Mammary epithelial cell (primary cell): ENCODE measurements at regions of chr6 and their contacts with region 1.

Region 1: GRCh38 chr6:90098001-90098531 is 198.6 kb downstream of the BACH2 start:
- DNase-seq: peak; percentile 98
- H3K4me3 ChIP-seq: no peak overlapping the region
- H3K27ac ChIP-seq: peak overlapping the region; percentile 94
- H3K4me1 ChIP-seq: peaks cover 26% of the 10 kb centered on the region
- H3K27me3 ChIP-seq: no peaks in the 10 kb centered on the region
- CTCF ChIP-seq: peak; percentile 53 to 68

Region 2: GRCh38 chr6:89745716-89746115 is 352.4 kb before region 1 on chr6:
- CTCF ChIA-PET with region 1: no interaction called
- dilution Hi-C with region 1: no loop called
- in situ Hi-C with region 1: no loop called
- intact Hi-C with region 1: no loop called
- DNase-seq: no peak
- H3K4me3 ChIP-seq: no peak overlapping the region
- H3K27ac ChIP-seq: peak overlapping the region; percentile 43
- H3K4me1 ChIP-seq: peaks cover 8% of the 10 kb centered on the region
- H3K27me3 ChIP-seq: no peaks in the 10 kb centered on the region
- CTCF ChIP-seq: no peak

Region 3: GRCh38 chr6:89999154-89999553 is 98.9 kb before region 1 on chr6:
- CTCF ChIA-PET with region 1: interaction called, 3 read pairs
- dilution Hi-C with region 1: no loop called
- in situ Hi-C with region 1: no loop called
- intact Hi-C with region 1: loop called (anchors 5 kb)
- DNase-seq: peak; percentile 77
- H3K4me3 ChIP-seq: no peak overlapping the region
- H3K27ac ChIP-seq: no peak overlapping the region
- H3K4me1 ChIP-seq: peaks cover 44% of the 10 kb centered on the region
- H3K27me3 ChIP-seq: no peaks in the 10 kb centered on the region
- CTCF ChIP-seq: no peak

Region 4: DNA sequence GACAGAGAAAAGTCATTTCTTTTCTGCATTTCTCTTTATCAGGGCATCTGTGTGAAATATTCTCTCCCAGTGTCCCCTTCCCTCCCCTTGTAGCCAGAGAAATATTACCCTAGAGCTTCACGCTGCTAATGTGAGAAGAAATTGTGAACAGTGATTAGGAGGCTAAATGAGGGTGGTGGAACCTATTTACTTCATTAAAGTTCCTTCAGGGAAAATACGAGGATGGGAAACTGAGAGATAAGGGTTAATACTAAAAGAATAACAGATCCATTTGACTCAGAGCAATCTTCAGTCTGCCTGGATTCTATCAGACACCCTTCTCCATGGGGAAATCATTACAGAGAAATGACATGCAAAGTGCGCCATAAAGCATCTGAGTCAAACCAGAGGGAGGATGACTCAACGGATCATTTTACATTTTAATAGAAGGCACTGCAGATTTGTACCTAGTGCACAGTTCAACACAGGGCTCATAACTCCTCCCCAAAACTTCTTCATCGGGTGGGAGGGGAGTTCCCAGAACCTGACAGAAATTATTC is 72.5 kb before region 1 on chr6:
- CTCF ChIA-PET with region 1: no interaction called
- dilution Hi-C with region 1: no loop called
- in situ Hi-C with region 1: no loop called
- intact Hi-C with region 1: no loop called
- DNase-seq: peak; percentile 86
- H3K4me3 ChIP-seq: no peak overlapping the region
- H3K27ac ChIP-seq: no peak overlapping the region
- H3K4me1 ChIP-seq: peaks cover 9% of the 10 kb centered on the region
- H3K27me3 ChIP-seq: no peaks in the 10 kb centered on the region
- CTCF ChIP-seq: no peak

Region 5: GRCh38 chr6:90144396-90144795 is 46.3 kb after region 1 on chr6:
- CTCF ChIA-PET with region 1: no interaction called
- dilution Hi-C with region 1: no loop called
- in situ Hi-C with region 1: no loop called
- intact Hi-C with region 1: no loop called
- DNase-seq: peak; percentile 42
- H3K4me3 ChIP-seq: no peak overlapping the region
- H3K27ac ChIP-seq: no peak overlapping the region
- H3K4me1 ChIP-seq: no peaks in the 10 kb centered on the region
- H3K27me3 ChIP-seq: no peaks in the 10 kb centered on the region
- CTCF ChIP-seq: no peak

Region 6: DNA sequence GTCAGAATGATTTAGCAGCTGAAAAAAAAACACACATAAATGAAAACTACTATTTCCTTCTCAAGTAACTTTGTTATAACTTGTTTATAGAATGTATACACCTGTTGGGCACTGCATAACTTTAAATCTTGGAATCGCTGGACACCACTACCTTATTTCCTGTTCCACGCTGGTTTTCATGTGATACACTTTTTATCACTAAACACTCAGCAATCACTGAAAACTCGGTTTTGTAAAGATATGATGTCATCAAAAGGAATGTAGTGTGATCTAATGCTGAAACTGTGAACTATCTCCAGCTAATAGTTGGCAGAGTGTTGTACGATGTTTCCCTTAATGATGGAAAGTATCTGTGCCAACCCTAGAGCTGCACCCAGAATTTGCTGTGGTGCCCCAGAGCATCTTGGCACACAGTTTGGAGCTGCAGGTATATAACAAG is 70.6 kb after region 1 on chr6:
- CTCF ChIA-PET with region 1: no interaction called
- dilution Hi-C with region 1: no loop called
- in situ Hi-C with region 1: no loop called
- intact Hi-C with region 1: loop called (anchors 2 kb)
- DNase-seq: peak; percentile 79
- H3K4me3 ChIP-seq: no peak overlapping the region
- H3K27ac ChIP-seq: peak overlapping the region; percentile 38
- H3K4me1 ChIP-seq: peaks cover 11% of the 10 kb centered on the region
- H3K27me3 ChIP-seq: no peaks in the 10 kb centered on the region
- CTCF ChIP-seq: no peak

Region 7: GRCh38 chr6:90216072-90216977 is 118.3 kb after region 1 on chr6:
- CTCF ChIA-PET with region 1: interaction called, 5 read pairs
- dilution Hi-C with region 1: no loop called
- in situ Hi-C with region 1: no loop called
- intact Hi-C with region 1: loop called (anchors 5 kb)
- DNase-seq: no peak
- H3K4me3 ChIP-seq: no peak overlapping the region
- H3K27ac ChIP-seq: no peak overlapping the region
- H3K4me1 ChIP-seq: peaks cover 23% of the 10 kb centered on the region
- H3K27me3 ChIP-seq: no peaks in the 10 kb centered on the region
- CTCF ChIP-seq: no peak

Region 8: DNA sequence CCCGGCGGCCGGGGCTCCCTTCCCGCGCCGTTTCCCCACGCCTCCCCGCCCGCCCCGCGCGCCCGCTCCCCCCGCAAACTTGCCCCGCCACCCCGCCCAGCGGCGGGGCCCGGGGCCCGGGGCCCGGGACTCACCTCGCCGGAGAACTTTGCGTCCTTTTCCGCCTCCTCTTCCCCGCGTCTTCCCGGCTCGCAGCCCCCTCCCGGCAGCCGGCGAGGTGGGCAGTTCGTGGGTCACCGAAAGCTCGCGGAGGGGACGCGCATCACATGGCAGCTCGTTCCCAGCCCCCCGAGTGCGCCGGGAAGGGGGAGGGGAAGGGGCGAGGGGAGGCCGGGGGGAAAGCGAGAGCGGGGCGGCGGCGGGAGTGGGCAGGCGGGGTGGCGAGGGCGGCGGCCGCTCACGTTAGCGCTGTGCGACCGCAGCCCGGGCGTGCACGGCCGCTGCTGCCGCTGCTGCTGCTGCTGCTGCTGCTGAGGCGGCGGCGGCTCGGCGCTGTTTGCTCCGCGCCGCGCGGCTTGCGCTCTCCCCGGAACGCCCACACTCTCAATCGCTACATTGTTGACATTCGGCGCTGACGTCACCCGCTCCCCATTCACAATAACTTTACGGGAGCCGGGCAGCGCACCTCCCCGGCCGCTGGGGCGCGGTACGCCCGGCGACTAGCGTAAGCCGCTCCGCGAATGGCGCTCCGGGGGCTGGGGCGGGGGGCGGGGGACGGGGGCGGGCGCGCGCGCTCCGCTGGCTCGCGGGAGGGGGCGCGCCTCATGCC is 198.5 kb after region 1 on chr6 and contains the start of gene BACH2:
- CTCF ChIA-PET with region 1: no interaction called
- dilution Hi-C with region 1: no loop called
- in situ Hi-C with region 1: no loop called
- intact Hi-C with region 1: loop called (anchors 1 kb)
- DNase-seq: peak; percentile 90
- H3K4me3 ChIP-seq: peak within 1 kb of the TSS; percentile 67 to 85 (median 73)
- H3K27ac ChIP-seq: no peak within 1 kb of the TSS
- H3K4me1 ChIP-seq: peaks cover 18% of the 10 kb centered on the region
- H3K27me3 ChIP-seq: peaks cover 2% of the 10 kb centered on the region
- CTCF ChIP-seq: peak in 1 of 2 donors; percentile 35
- total RNA-seq, gene BACH2: 3.6 to 4.5 TPM

Region 9: GRCh38 chr6:90478789-90479602 is 380.9 kb after region 1 on chr6:
- CTCF ChIA-PET with region 1: no interaction called
- dilution Hi-C with region 1: no loop called
- in situ Hi-C with region 1: no loop called
- intact Hi-C with region 1: loop called (anchors 1 kb)
- DNase-seq: peak; percentile 93
- H3K4me3 ChIP-seq: no peak overlapping the region
- H3K27ac ChIP-seq: no peak overlapping the region
- H3K4me1 ChIP-seq: peaks cover 16% of the 10 kb centered on the region
- H3K27me3 ChIP-seq: no peaks in the 10 kb centered on the region
- CTCF ChIP-seq: peak; percentile 80 to 88

Region 10: DNA sequence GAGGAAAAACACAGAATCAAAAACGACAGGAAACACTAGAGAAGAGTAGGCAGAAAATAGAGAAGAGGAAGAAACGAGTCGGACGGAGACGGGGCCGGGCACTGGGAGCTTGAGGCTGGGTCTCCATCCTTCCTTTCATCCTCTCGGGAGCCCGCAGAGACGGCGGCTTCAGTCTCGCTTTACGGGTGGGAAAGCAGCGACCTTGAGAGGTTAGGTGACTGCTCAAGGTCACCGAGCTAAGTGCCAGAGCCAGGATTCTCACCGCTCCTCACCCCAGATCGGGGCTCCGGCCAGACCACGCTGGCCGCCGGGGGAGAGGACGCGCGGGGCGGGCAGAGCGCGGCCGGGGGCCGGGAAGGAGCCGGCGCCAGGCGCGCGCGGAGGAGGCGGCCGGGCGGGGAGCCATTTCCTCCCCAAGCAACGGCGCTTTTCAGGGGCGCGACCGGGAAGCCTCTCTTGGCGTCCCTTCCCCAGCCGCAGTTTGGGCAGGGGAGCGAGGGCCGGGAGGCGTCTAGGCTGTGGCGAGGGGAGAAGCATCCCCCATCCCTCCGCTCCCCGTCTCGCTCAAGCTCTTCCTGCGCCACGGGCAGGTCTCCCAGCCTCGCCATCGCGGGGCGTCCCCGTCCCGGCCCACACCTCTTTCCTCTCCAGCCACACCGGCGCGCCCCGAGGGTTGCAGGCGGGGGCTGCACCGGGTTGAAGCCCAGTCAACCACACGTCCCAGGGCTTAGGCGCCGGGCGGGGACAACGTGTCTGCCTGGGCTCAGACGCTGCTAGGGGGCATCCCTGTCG is 512.9 kb after region 1 on chr6:
- CTCF ChIA-PET with region 1: no interaction called
- dilution Hi-C with region 1: no loop called
- in situ Hi-C with region 1: no loop called
- intact Hi-C with region 1: no loop called
- DNase-seq: peak; percentile 26
- H3K4me3 ChIP-seq: peak overlapping the region; percentile 52 to 70 (median 61)
- H3K27ac ChIP-seq: no peak overlapping the region
- H3K4me1 ChIP-seq: peaks cover 17% of the 10 kb centered on the region
- H3K27me3 ChIP-seq: peaks cover 12% of the 10 kb centered on the region
- CTCF ChIP-seq: no peak